ENCODE measurements at regions of chr6 and their contacts with region 1.

Region 1: DNA sequence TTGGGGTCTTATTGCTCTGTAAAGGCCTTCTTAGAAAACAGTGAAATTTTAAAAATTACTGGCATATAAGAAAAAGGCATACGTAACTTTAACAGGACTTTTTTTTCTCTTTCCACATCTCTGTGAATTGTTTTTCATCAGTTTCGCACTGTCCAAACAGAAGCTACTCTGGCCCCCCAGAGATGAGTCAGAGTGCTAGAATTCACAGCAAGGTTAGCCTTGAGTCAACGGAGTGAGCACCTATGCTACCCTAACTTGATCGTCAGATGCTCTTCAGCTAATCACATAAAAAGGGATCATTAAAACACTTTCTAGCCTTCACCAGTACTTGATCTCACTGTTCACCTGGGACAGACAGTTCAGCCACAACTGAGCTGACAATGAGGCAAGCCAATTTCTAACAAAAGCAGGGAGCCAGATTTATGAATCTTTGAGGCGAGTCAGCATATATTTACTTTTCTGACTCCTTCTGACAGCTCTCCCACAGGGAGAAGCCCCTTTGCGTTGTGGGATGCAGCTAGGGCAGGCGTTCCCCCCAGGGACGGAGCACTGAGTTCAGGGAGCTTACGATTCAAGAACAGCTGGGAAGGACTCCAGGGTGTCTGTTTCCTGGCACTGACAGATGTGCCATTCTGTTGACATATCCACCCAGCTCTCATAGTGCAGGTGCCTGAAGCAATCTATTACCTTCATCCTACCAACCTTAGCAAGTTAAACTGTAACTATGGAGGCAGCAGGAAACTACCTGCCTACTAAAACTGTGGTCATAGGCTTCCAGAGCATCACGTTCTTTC is 46.4 kb upstream of the SPDEF start:
- DNase-seq: peak; percentile 54 to 59
- ATAC-seq: peak; percentile 98

Region 2: GRCh38 chr6:34161857-34162515 is 440.5 kb before region 1 on chr6:
- intact Hi-C with region 1: loop called in 1 of 2 experiments (anchors 10 kb)
- DNase-seq: no peak
- ATAC-seq: no peak

Region 3: DNA sequence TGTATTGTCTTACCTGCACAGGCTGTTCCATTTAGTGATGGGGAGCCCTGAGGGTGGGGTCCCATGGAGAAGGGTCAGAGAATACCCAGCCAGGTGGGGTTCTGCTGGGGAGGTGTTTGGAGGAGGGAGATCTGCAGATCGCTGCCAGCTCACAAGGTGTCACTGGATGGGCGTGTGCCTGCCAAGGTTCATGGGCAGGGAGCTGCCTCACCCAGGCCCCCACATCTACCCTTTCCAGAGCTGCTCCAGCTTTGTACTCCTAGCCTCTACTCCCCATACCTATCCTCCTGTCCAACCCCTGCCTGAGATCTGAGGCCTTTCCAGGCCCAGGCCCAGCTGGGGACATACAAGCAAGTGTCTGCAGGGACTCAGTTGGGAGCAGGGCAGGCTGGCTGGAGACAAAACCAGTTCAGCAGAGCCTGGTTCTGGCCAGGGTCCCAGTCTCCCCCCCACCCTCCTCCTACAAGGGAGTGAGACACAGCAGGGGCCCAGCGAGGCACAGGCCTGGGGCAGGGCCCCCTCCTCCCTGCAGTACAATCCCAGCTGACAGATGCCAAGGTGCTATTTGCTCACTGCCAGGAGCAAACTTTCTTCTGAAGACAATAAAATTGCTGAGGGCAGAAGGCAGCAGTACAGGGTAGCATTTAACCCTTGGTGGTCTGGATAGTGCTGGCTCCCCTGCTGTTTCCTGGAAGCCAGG is 66.1 kb before region 1 on chr6:
- intact Hi-C with region 1: no loop called
- DNase-seq: peak; percentile 64 to 73
- ATAC-seq: peak; percentile 81